ENCODE measurements at regions of chr18 and their contacts with region 1.

Region 1: DNA sequence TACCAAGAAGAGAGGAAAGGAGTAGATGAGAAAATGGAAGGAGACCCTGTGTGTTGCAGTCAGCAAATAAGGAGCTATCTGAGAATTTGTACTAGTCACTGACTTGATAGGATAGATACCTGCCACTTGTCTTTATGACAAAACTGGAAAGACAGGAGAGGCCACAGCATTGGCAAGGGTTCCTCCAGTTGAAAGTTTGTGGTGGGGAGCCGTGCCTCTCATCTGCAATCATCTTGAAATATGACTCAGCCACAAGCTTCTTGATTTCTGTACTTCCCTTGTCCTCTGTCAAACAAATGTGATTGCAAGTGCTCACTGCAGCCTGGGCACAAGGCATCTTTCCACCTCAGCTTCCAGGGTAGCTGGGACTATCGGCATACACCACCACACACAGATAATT is 99.1 kb downstream of the GREB1L start:
- DNase-seq: no peak
- H3K4me3 ChIP-seq: no peak overlapping the region
- H3K4me3 Mint-ChIP-seq: no peak overlapping the region
- H3K27ac Mint-ChIP-seq: peak overlapping the region; percentile 49
- H3K4me1 ChIP-seq: peaks cover 20% of the 10 kb centered on the region
- H3K4me1 Mint-ChIP-seq: peaks cover 15% of the 10 kb centered on the region
- H3K27me3 ChIP-seq: no peaks in the 10 kb centered on the region
- H3K27me3 Mint-ChIP-seq: no peaks in the 10 kb centered on the region
- CTCF ChIP-seq: no peak

Region 2: GRCh38 chr18:21362831-21363230 is 21.7 kb after region 1 on chr18:
- CTCF ChIA-PET with region 1: no interaction called
- POLR2A ChIA-PET with region 1: no interaction called
- intact Hi-C with region 1: loop called (anchors 2 kb)
- DNase-seq: no peak
- H3K4me3 ChIP-seq: no peak overlapping the region
- H3K4me3 Mint-ChIP-seq: no peak overlapping the region
- H3K27ac Mint-ChIP-seq: no peak overlapping the region
- H3K4me1 ChIP-seq: peaks cover 51% of the 10 kb centered on the region
- H3K4me1 Mint-ChIP-seq: peaks cover 32% of the 10 kb centered on the region
- H3K27me3 ChIP-seq: no peaks in the 10 kb centered on the region
- H3K27me3 Mint-ChIP-seq: no peaks in the 10 kb centered on the region
- CTCF ChIP-seq: no peak

Region 3: GRCh38 chr18:21391074-21391673 is 50.0 kb after region 1 on chr18:
- CTCF ChIA-PET with region 1: no interaction called
- POLR2A ChIA-PET with region 1: no interaction called
- intact Hi-C with region 1: loop called (anchors 5 kb)
- DNase-seq: no peak
- H3K4me3 ChIP-seq: no peak overlapping the region
- H3K4me3 Mint-ChIP-seq: no peak overlapping the region
- H3K27ac Mint-ChIP-seq: no peak overlapping the region
- H3K4me1 ChIP-seq: peaks cover 14% of the 10 kb centered on the region; the same call in 1 of the 2 replicates
- H3K4me1 Mint-ChIP-seq: no peaks in the 10 kb centered on the region
- H3K27me3 ChIP-seq: no peaks in the 10 kb centered on the region
- H3K27me3 Mint-ChIP-seq: no peaks in the 10 kb centered on the region
- CTCF ChIP-seq: no peak

Region 4: GRCh38 chr18:21406111-21406510 is 65.0 kb after region 1 on chr18:
- CTCF ChIA-PET with region 1: no interaction called
- POLR2A ChIA-PET with region 1: no interaction called
- intact Hi-C with region 1: no loop called
- DNase-seq: no peak
- H3K4me3 ChIP-seq: no peak overlapping the region
- H3K4me3 Mint-ChIP-seq: no peak overlapping the region
- H3K27ac Mint-ChIP-seq: no peak overlapping the region
- H3K4me1 ChIP-seq: peaks cover 23% of the 10 kb centered on the region; the same call in 1 of the 2 replicates
- H3K4me1 Mint-ChIP-seq: no peaks in the 10 kb centered on the region
- H3K27me3 ChIP-seq: no peaks in the 10 kb centered on the region
- H3K27me3 Mint-ChIP-seq: no peaks in the 10 kb centered on the region
- CTCF ChIP-seq: no peak

Measured in Caco-2 (cell line).